Ovary (tissue), 10 donors: ENCODE measurements at regions of chr4 and their contacts with region 1.

Region 1: GRCh38 chr4:129929984-129930383 is 834.0 kb downstream of the C4orf33 start:
- DNase-seq: no peak
- H3K4me3 ChIP-seq: no peak overlapping the region
- H3K27ac ChIP-seq: no peak overlapping the region
- H3K4me1 ChIP-seq: no peaks in the 10 kb centered on the region
- H3K27me3 ChIP-seq: no peaks in the 10 kb centered on the region
- CTCF ChIP-seq: no peak
- EP300 ChIP-seq: no peak
- POLR2A ChIP-seq: no peak

Region 2: GRCh38 chr4:129916991-129917390 is 13.0 kb before region 1 on chr4:
- intact Hi-C with region 1: loop called in 1 of 4 experiments (anchors 1 kb)
- DNase-seq: no peak
- H3K4me3 ChIP-seq: no peak overlapping the region
- H3K27ac ChIP-seq: no peak overlapping the region
- H3K4me1 ChIP-seq: no peaks in the 10 kb centered on the region
- H3K27me3 ChIP-seq: no peaks in the 10 kb centered on the region
- CTCF ChIP-seq: no peak
- EP300 ChIP-seq: no peak
- POLR2A ChIP-seq: no peak